ENCODE measurements at regions of chr6 and their contacts with region 1.

Region 1: DNA sequence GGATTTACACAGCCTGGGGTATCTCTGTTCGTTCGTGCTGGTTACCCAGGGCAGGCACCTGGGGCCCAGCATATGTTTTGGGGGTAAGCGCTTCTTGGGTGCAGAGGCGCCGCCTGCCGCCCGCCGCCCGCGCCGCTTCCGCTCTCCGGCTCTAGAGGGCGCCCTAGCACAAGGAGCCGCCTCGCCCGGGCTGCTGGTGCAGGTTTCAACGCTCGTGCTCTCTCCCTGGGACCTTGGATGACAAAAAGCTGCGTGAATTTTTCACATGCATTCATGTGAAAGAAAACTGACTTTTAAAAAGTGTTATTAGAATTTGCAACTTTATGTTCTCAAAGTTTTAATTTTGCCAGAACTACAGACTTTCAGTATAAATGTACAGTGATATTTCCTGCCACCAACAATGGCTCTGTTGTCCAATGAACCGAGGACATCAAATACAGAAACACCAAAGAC is 32.5 kb downstream of the PRR18 start:
- DNase-seq: peak; percentile 85
- ATAC-seq: peak; percentile 94
- H3K4me3 Mint-ChIP-seq: no peak overlapping the region
- H3K27ac Mint-ChIP-seq: no peak overlapping the region
- H3K4me1 Mint-ChIP-seq: peaks cover 8% of the 10 kb centered on the region
- H3K27me3 Mint-ChIP-seq: peaks cover 2% of the 10 kb centered on the region
- CTCF ChIP-seq: peak; percentile 97

Region 2: GRCh38 chr6:166156942-166157341 is 118.8 kb before region 1 on chr6:
- CTCF ChIA-PET with region 1: interaction called, 5 read pairs
- POLR2A ChIA-PET with region 1: no interaction called
- intact Hi-C with region 1: loop called (anchors 5 kb)
- DNase-seq: no peak
- ATAC-seq: no peak
- H3K4me3 Mint-ChIP-seq: no peak overlapping the region
- H3K27ac Mint-ChIP-seq: no peak overlapping the region
- H3K4me1 Mint-ChIP-seq: peaks cover 3% of the 10 kb centered on the region
- H3K27me3 Mint-ChIP-seq: peaks cover 23% of the 10 kb centered on the region
- CTCF ChIP-seq: no peak

Region 3: DNA sequence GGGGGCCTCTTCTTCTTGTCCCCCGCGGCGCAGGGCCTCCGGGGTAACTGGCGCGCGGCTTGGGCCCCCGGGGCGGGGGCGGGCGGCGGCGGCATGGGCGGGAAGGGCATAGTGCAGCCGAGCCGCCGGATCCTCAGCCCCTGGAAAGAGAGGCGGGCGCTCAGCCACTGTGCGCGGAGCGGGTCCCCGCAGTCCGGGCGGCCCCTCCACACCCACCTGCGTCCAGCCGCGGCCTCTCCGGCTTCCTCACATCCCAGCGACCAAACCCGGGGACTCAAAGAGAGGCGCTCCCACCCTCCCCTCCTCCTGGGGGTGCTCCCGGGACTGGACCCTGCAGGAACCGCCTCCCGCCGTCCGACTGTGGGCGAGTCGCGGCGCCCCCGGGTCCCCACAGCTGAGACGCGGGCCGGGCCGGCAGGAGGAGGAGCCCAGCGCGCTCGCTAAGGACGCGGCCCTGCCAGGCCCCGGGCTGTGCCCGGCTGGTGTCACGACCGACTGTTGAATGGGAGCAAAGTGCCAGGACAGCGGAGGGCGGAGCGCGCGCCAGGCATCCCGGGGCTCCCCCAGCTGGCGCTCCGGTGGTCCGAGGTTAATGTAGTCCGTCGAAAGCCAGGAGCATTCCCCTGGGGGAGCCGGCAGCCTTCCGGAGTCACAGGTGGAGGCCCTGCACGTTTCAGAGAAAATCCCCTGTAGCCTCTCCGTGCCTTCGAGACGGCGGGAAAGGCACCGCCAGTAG is 32.5 kb after region 1 on chr6 and contains the start of gene PRR18:
- CTCF ChIA-PET with region 1: interaction called, 11 read pairs
- POLR2A ChIA-PET with region 1: no interaction called
- intact Hi-C with region 1: loop called (anchors 1 kb)
- DNase-seq: peak; percentile 37
- ATAC-seq: peak; percentile 65
- H3K4me3 Mint-ChIP-seq: peak within 1 kb of the TSS; percentile 78
- H3K27ac Mint-ChIP-seq: no peak within 1 kb of the TSS
- H3K4me1 Mint-ChIP-seq: peaks cover 8% of the 10 kb centered on the region
- H3K27me3 Mint-ChIP-seq: peaks cover 28% of the 10 kb centered on the region
- CTCF ChIP-seq: no peak
- total RNA-seq, gene PRR18: 0.10 TPM in 1 of 2 replicates, not detected in the other

Region 4: DNA sequence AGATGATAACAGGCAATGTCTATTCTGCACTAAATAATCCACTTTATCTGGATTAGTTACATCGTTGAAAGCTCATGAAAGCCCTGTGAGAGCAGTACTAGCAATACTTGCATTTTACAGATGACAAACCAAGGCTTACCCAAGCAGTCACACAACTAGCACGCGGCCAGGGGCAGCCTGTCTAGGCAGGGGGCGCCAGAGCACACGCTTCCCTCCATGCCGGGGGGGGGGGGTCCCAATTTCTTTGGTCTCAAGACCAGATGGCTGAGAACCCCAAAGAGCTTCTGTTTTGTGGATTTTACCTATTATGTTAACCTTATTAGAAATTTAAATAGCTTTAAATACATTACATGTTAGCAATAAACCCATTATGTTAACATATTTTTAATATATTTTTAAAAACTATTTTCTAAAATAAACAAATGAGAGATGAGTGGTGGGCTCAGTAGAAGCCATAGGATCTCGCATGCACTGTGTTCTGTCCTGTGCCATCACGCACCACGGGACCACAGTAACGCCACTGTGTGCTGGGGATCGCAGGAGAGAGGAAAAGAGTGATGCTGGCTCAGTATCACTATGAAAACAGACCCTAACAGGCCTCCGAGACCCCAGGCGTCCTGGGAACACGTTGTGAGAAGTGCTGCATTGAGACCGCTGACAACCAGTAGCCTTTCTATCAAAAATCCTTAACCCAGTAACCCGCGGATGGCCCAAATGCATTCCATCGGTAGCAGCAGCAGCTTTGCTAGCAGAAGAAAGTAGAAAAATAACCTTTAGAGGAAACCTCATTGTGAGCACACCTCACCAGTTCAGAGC is 37.7 kb after region 1 on chr6:
- CTCF ChIA-PET with region 1: interaction called, 11 read pairs
- POLR2A ChIA-PET with region 1: no interaction called
- intact Hi-C with region 1: loop called (anchors 1 kb)
- DNase-seq: no peak
- ATAC-seq: peak; percentile 88
- H3K4me3 Mint-ChIP-seq: no peak overlapping the region
- H3K27ac Mint-ChIP-seq: no peak overlapping the region
- H3K4me1 Mint-ChIP-seq: peaks cover 6% of the 10 kb centered on the region
- H3K27me3 Mint-ChIP-seq: peaks cover 17% of the 10 kb centered on the region
- CTCF ChIP-seq: no peak

Region 5: DNA sequence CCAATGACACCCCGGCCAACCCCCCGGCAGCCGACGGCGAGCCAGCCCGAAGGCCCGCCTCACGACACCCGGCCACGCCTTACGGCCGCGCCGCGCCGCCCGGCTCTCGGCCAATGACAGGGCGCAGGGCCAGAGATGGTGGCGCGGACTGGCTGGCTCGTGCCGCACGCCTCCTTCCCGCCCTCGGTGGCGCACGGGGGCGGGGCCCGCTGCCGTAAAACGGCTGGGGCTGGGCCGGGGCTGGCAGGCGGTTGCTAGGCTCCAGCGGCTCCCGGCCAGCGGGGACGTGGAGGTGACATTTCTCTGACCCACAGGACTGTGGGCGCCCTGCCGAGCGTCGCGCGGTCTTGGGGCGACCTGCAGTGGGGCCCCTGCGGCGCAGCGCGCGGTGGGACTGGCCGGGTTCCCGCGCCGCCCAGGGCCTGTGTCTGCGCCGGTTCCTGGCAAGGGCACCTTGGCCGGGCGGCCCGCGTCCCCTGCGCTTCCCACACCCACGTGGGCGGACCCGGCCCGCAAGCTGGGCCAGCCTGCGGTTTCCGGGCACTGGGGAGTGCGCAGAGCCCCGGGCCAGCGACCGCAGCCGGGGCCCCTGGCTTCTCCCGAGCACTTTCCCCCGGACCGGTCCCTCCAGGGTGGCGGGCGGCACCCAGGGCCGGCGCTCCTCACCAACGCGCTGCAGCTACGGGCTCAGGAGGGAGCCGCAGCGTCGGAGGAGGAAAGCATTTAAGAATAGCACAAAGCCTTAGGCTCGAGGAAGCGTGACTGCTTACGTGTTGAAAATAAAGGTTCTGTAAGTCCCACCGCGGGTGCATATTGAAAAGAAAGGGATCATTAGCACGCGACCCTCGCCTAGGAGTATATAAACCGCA is 107.4 kb after region 1 on chr6 and contains the start of gene MPC1:
- CTCF ChIA-PET with region 1: interaction called, 14 read pairs
- POLR2A ChIA-PET with region 1: interaction called, 3 read pairs
- intact Hi-C with region 1: loop called (anchors 1 kb)
- DNase-seq: peak; percentile 96
- ATAC-seq: peak; percentile 94
- H3K4me3 Mint-ChIP-seq: peak within 1 kb of the TSS; percentile 92
- H3K27ac Mint-ChIP-seq: peak within 1 kb of the TSS; percentile 76
- H3K4me1 Mint-ChIP-seq: peaks cover 15% of the 10 kb centered on the region
- H3K27me3 Mint-ChIP-seq: no peaks in the 10 kb centered on the region
- CTCF ChIP-seq: no peak
- total RNA-seq, gene MPC1: 16.7 and 17.3 TPM in 2 replicates

Region 6: GRCh38 chr6:166456395-166457156 is 180.8 kb after region 1 on chr6:
- CTCF ChIA-PET with region 1: no interaction called
- POLR2A ChIA-PET with region 1: no interaction called
- intact Hi-C with region 1: no loop called
- DNase-seq: no peak
- ATAC-seq: no peak
- H3K4me3 Mint-ChIP-seq: no peak overlapping the region
- H3K27ac Mint-ChIP-seq: no peak overlapping the region
- H3K4me1 Mint-ChIP-seq: peaks cover 16% of the 10 kb centered on the region
- H3K27me3 Mint-ChIP-seq: no peaks in the 10 kb centered on the region
- CTCF ChIP-seq: no peak

Region 7: DNA sequence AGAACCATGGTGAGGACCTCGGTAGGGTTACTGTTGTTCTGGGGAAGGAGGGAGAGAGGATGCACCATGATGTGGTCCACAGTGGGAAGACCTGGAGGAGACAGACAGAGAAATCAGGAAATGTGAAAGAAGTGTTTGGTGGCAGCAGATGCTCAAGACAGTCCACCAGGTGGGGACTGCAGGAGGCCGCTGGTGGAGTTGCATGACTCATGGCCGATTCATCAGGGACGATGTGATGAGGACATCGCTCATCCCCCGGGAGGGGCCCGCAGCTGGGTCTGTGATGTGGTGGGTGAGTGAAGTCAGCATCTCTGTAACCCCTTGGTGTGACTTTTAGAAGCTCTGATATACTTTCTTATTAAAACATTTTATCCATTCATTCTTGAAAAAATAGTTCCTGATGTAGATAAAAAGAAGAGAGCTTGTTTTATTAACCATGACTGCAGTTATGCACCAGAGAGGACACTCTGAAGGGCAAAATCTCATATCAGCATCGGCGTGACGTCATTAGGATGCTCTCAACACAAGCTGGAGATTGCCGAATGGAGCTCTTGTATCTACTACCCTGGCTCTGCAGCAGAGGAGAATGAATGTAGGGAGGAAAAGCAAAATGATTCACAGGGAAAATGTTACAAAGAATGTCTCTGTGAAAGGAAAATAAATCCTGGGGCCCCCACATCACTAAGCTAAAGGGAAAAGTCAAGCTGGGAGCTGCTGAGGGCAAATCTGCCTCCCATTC is 239.5 kb after region 1 on chr6:
- CTCF ChIA-PET with region 1: no interaction called
- POLR2A ChIA-PET with region 1: no interaction called
- intact Hi-C with region 1: loop called (anchors 5 kb)
- DNase-seq: peak; percentile 33
- ATAC-seq: peak; percentile 78
- H3K4me3 Mint-ChIP-seq: no peak overlapping the region
- H3K27ac Mint-ChIP-seq: no peak overlapping the region
- H3K4me1 Mint-ChIP-seq: peaks cover 20% of the 10 kb centered on the region
- H3K27me3 Mint-ChIP-seq: no peaks in the 10 kb centered on the region
- CTCF ChIP-seq: no peak

Measured in activated B cell treated with CpG ODN at 0.5 μM for 24 hours (primary cell).